Breast epithelium (tissue), 4 donors: ENCODE measurements at regions of chr6 and their contacts with region 1.

Region 1: GRCh38 chr6:118249680-118250079 is 298.4 kb upstream of the PLN start:
- DNase-seq: no peak
- H3K4me3 ChIP-seq: no peak overlapping the region
- H3K27ac ChIP-seq: no peak overlapping the region
- H3K4me1 ChIP-seq: no peaks in the 10 kb centered on the region
- H3K27me3 ChIP-seq: no peaks in the 10 kb centered on the region
- CTCF ChIP-seq: no peak
- POLR2A ChIP-seq: no peak

Region 2: GRCh38 chr6:117265410-117266256 is 984.0 kb before region 1 on chr6 and contains the start of gene VGLL2:
- intact Hi-C with region 1: no loop called
- DNase-seq: no peak
- H3K4me3 ChIP-seq: peak within 1 kb of the TSS; percentile 26 to 69 (median 45)
- H3K27ac ChIP-seq: no peak within 1 kb of the TSS
- H3K4me1 ChIP-seq: peaks cover 3 to 5% of the 10 kb centered on the region in 2 donors
- H3K27me3 ChIP-seq: peaks cover 0 to 94% of the 10 kb centered on the region in 2 donors
- CTCF ChIP-seq: no peak
- POLR2A ChIP-seq: no peak
- total RNA-seq, gene VGLL2: not detected

Region 3: DNA sequence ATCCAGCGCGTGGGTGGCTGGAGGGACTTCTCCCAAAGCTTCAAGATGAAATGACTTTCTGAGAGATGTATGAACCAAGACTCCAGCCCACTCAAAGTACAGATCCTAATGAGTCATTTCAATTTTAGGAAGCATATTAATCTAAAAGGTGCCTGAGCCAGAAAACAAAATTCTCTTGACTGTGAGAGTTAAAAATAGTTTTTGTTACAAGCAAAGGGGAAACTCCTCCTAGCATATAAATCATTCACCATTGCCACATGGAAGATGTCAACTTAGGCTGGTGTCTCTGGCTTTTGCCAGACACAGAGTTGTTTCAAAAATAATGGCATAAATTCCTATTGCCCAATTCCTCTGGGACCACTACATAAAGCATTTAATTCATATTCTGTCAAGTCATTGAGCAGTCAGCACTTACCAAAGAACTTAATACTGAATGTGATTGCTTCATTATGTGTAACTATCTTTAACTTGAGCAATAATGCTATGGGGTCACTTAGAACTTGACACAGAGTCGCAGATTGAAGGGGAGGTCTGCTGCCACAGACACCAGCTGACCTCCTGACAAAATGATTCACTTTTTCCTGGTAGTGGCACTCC is 62.0 kb before region 1 on chr6:
- intact Hi-C with region 1: no loop called
- DNase-seq: no peak
- H3K4me3 ChIP-seq: peak overlapping the region in 1 of 3 donors; percentile 2
- H3K27ac ChIP-seq: no peak overlapping the region
- H3K4me1 ChIP-seq: no peaks in the 10 kb centered on the region
- H3K27me3 ChIP-seq: no peaks in the 10 kb centered on the region
- CTCF ChIP-seq: no peak
- POLR2A ChIP-seq: no peak

Region 4: GRCh38 chr6:119890470-119890869 is 1640.8 kb after region 1 on chr6:
- intact Hi-C with region 1: loop called (anchors 5 kb)
- DNase-seq: no peak
- H3K4me3 ChIP-seq: no peak overlapping the region
- H3K27ac ChIP-seq: no peak overlapping the region
- H3K4me1 ChIP-seq: no peaks in the 10 kb centered on the region
- H3K27me3 ChIP-seq: no peaks in the 10 kb centered on the region
- CTCF ChIP-seq: no peak
- POLR2A ChIP-seq: no peak